ENCODE measurements at regions of chr12 and their contacts with region 1.

Region 1: DNA sequence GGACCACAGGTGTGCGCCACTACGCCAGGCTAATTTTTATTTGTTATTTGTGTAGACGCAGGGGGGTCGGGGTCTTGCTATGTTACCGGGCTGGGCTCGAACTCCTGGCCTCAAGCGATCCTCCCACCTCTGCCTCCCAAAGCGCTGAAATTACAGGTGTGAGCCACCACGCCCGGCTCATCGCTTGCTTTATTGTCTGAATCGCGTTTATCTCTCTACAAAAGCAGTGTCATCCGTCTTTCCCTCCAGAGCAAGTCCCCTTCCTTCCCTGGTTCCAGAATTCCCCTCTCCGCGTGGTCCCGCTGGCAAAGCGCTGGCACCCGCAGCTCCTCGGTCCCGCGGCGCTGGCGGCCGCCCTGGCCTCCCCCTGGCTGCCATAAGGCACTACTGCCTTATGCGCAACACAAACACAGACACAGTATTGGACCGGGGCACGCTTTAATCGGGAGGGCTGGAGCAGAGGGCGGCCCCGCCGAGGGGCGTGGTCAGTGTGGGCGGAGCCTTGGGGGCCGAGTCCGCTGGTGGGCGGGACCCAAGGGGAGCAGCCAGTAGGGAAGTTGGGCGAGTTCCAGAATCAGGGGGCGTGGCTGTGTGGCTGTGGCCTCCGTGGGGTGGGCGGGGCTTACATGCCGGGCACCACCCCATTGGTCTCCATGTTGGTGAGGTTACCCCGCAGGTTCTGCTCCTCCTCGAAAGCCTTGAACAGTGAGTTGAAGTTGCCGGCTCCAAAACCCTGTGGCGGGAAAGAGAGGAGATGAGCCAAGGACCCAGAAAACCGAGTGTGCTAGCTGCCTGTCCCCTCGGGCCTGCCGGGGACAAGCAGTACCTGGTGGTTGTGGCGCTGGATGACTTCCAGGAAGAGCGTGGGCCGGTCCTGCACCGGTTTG is 19.3 kb downstream of the HPD start:
- DNase-seq: peak; percentile 96 to 99 (median 98)
- H3K4me3 ChIP-seq: peak overlapping the region; percentile 35 to 89 (median 83)
- H3K27ac ChIP-seq: peak overlapping the region in 1 of 2 experiments; percentile 77
- H3K4me1 ChIP-seq: peaks cover 0 to 12% (median 10%) of the 10 kb centered on the region in 4 experiments
- H3K27me3 ChIP-seq: no peaks in the 10 kb centered on the region

Region 2: GRCh38 chr12:121823101-121823726 is 16.1 kb before region 1 on chr12:
- CTCF ChIA-PET with region 1: interaction called, 10 read pairs
- POLR2A ChIA-PET with region 1: no interaction called
- DNase-seq: no peak
- H3K4me3 ChIP-seq: no peak overlapping the region
- H3K27ac ChIP-seq: no peak overlapping the region
- H3K4me1 ChIP-seq: no peaks in the 10 kb centered on the region
- H3K27me3 ChIP-seq: no peaks in the 10 kb centered on the region

Region 3: DNA sequence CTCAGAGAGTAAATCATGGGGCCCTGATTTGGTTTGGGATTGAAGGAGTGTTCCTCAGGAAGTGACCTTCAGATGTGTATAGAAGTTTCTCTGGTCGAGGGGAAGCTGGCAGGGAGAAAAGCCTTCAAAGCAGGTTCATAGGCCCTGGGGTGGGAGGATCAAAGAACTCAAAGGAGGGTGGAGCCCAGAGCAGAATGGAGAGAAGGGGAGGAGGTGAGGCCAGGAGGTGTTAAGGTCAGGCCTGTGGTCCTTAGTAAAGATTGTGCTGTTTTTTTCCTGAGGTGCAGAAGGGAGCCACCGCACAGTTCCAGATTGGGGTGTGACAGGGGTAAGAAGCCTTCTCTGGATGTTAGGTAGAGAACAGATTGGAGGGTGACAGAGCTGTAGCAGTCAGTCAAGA is 69.4 kb after region 1 on chr12:
- CTCF ChIA-PET with region 1: no interaction called
- POLR2A ChIA-PET with region 1: no interaction called
- DNase-seq: no peak
- H3K4me3 ChIP-seq: no peak overlapping the region
- H3K27ac ChIP-seq: no peak overlapping the region
- H3K4me1 ChIP-seq: no peaks in the 10 kb centered on the region
- H3K27me3 ChIP-seq: no peaks in the 10 kb centered on the region

Region 4: GRCh38 chr12:121955258-121956235 is 116.2 kb after region 1 on chr12:
- CTCF ChIA-PET with region 1: no interaction called
- POLR2A ChIA-PET with region 1: interaction called, 10 read pairs
- DNase-seq: peak; percentile 31 to 57 (median 53)
- H3K4me3 ChIP-seq: no peak overlapping the region
- H3K27ac ChIP-seq: no peak overlapping the region
- H3K4me1 ChIP-seq: no peaks in the 10 kb centered on the region
- H3K27me3 ChIP-seq: peaks cover 0 to 2% (median 0%) of the 10 kb centered on the region in 5 experiments

Region 5: GRCh38 chr12:121992059-121992879 is 152.9 kb after region 1 on chr12:
- CTCF ChIA-PET with region 1: no interaction called
- POLR2A ChIA-PET with region 1: no interaction called
- DNase-seq: peak; percentile 83 to 96 (median 94)
- H3K4me3 ChIP-seq: peak overlapping the region in 1 of 7 experiments; percentile 26
- H3K27ac ChIP-seq: peak overlapping the region; percentile 9 to 52
- H3K4me1 ChIP-seq: peaks cover 0 to 25% (median 21%) of the 10 kb centered on the region in 4 experiments
- H3K27me3 ChIP-seq: no peaks in the 10 kb centered on the region

Measured in common myeloid progenitor, CD34-positive (primary cell).